GM10248 (cell line): ENCODE measurements at regions of chr6 and their contacts with region 1.

Region 1: DNA sequence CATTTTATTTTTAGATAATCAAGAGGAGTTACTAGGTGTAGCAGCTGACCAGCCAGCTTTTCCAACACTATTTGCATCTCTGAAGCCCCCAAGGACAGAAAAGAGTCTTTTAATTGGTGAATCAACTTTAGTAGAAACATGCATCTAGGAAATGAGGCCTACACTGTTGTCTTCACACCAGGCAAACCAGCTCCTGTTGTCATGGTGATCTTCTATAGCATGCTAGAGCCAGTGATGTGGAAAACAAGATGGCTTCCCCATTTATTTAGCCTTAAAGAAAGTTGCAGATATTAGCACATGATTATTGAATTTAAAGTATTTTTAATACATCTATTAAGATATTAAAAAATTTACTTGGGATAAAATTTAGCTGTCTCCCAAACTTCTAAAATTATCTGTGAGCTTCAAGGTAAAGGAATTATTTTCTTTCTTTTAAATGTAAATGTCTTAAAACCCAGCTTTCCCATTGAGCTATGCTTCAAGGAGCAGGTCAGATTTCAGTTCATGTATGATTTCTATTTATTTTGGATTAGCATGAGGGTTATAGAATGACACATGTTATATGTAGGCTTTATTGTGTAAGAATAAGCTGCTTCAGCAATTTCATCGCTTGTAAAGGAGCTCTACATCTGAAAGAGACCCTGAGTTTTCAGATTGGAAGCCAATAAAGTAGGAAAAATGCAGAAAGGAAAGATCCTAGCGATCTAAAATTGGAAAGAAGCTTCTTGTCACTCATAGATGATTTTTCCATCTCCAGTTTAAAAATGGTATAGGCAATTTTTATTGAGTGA is 564.9 kb upstream of the CITED2 start:
- DNase-seq: no peak
- CTCF ChIP-seq: no peak

Region 2: GRCh38 chr6:139863346-139863745 is 76.0 kb before region 1 on chr6:
- CTCF ChIA-PET with region 1: no interaction called
- POLR2A ChIA-PET with region 1: no interaction called
- DNase-seq: no peak
- CTCF ChIP-seq: no peak

Region 3: GRCh38 chr6:139927742-139928305 is 11.6 kb before region 1 on chr6:
- CTCF ChIA-PET with region 1: interaction called, 11 read pairs
- POLR2A ChIA-PET with region 1: no interaction called
- DNase-seq: no peak
- CTCF ChIP-seq: no peak

Region 4: DNA sequence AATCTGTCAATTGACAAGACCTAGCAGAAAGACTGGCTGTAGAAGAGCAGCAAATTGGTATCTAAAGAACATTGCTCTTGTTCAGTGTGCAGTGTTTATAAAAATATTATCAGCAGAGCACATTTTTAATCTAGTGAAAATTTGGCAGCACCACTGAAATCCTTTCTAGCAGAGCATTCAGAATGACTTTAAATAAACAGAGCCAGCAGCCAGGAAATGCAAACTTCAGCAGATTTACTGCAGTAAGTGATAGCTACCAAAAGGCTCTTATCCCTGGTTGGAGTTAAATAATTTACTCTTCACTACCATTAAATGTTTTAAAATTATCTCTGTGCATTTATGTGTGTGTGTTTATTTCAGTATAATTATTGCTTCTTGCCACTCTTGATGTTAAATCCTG is 26.0 kb after region 1 on chr6:
- CTCF ChIA-PET with region 1: no interaction called
- POLR2A ChIA-PET with region 1: no interaction called
- DNase-seq: no peak
- CTCF ChIP-seq: no peak